Breast epithelium (tissue), 4 donors: ENCODE measurements at regions of chr20 and their contacts with region 1.

Region 1: GRCh38 chr20:54305421-54305820 is 97.5 kb downstream of the PFDN4 start:
- DNase-seq: no peak
- H3K4me3 ChIP-seq: no peak overlapping the region
- H3K27ac ChIP-seq: no peak overlapping the region
- H3K4me1 ChIP-seq: no peaks in the 10 kb centered on the region
- H3K27me3 ChIP-seq: no peaks in the 10 kb centered on the region
- CTCF ChIP-seq: no peak
- POLR2A ChIP-seq: no peak

Region 2: GRCh38 chr20:54272901-54273488 is 32.4 kb before region 1 on chr20:
- intact Hi-C with region 1: loop called (anchors 2 kb)
- DNase-seq: no peak
- H3K4me3 ChIP-seq: no peak overlapping the region
- H3K27ac ChIP-seq: no peak overlapping the region
- H3K4me1 ChIP-seq: peaks cover 0 to 3% of the 10 kb centered on the region in 2 donors
- H3K27me3 ChIP-seq: no peaks in the 10 kb centered on the region
- CTCF ChIP-seq: no peak
- POLR2A ChIP-seq: no peak

Region 3: DNA sequence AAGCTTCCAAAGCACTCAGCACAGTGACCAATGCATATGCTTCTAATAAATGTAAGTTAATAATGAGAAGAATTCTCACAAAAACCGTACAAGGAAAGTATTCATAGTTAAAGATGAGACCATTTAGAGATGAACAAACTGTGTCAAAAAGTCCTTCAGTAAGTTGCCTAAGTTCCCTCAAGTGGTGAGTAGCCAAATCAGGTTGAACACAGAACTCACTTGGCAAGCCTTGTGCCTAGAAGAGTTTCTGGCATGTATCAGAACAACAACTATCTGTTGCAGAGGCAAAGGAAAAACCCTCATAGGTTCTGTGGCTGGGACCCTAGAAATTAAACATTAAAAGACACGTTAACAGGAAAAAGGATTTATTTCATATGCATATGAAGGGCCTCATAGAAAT is 40.4 kb after region 1 on chr20:
- intact Hi-C with region 1: loop called (anchors 2 kb)
- DNase-seq: no peak
- H3K4me3 ChIP-seq: no peak overlapping the region
- H3K27ac ChIP-seq: no peak overlapping the region
- H3K4me1 ChIP-seq: no peaks in the 10 kb centered on the region
- H3K27me3 ChIP-seq: no peaks in the 10 kb centered on the region
- CTCF ChIP-seq: no peak
- POLR2A ChIP-seq: no peak